Esophagus squamous epithelium (tissue), 5 donors: ENCODE measurements at regions of chr17 and their contacts with region 1.

Region 1: GRCh38 chr17:73255671-73256181 is 6.0 kb downstream of the CPSF4L start:
- DNase-seq: no peak
- H3K4me3 ChIP-seq: no peak overlapping the region
- H3K27ac ChIP-seq: no peak overlapping the region
- H3K4me1 ChIP-seq: peaks cover 0 to 12% (median 0%) of the 10 kb centered on the region in 3 donors
- H3K27me3 ChIP-seq: no peaks in the 10 kb centered on the region
- CTCF ChIP-seq: peak; percentile 94 to 98 (median 96)
- POLR2A ChIP-seq: no peak

Region 2: DNA sequence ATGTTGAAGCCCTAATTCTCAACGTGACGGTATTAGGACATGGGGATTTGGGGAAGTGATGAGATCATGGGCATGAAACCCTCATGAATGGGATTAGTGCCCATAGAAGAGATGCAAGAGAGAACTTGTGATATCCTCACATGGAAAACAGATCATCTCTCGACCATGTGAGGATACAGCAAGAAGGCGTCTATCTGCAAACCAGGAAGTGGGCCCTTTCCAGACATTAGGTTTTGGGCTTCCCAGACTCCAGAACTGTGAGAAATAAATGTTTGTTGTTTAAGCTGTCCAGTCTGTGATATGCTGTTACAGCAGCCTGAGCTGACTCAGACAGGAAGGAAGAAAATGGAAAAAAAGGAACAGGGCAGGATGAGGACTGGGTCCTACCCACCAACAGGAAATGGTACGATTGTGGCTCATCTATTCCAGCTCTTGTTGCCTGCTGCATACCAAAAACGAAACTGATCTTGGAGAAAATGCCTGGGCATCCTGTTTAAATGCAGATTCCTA is 112.8 kb before region 1 on chr17:
- intact Hi-C with region 1: no loop called
- DNase-seq: no peak
- H3K4me3 ChIP-seq: no peak overlapping the region
- H3K27ac ChIP-seq: peak overlapping the region in 1 of 4 donors; percentile 21
- H3K4me1 ChIP-seq: peaks cover 0 to 8% (median 0%) of the 10 kb centered on the region in 3 donors
- H3K27me3 ChIP-seq: peaks cover 0 to 24% (median 0%) of the 10 kb centered on the region in 4 donors
- CTCF ChIP-seq: no peak
- POLR2A ChIP-seq: no peak

Region 3: GRCh38 chr17:73192894-73193701 is 62.6 kb before region 1 on chr17 and contains the start of gene COG1:
- intact Hi-C with region 1: loop called (anchors 10 kb)
- DNase-seq: peak; percentile 35
- H3K4me3 ChIP-seq: peak within 1 kb of the TSS; percentile 85 to 95 (median 92)
- H3K27ac ChIP-seq: peak within 1 kb of the TSS; percentile 87 to 94 (median 93)
- H3K4me1 ChIP-seq: peaks cover 6 to 39% (median 11%) of the 10 kb centered on the region in 3 donors
- H3K27me3 ChIP-seq: no peaks in the 10 kb centered on the region
- CTCF ChIP-seq: peak in 1 of 6 experiments; percentile 6
- POLR2A ChIP-seq: peak in 1 of 4 donors; percentile 28
- total RNA-seq, gene COG1: 8.0 to 14.7 (median 9.2) TPM

Region 4: DNA sequence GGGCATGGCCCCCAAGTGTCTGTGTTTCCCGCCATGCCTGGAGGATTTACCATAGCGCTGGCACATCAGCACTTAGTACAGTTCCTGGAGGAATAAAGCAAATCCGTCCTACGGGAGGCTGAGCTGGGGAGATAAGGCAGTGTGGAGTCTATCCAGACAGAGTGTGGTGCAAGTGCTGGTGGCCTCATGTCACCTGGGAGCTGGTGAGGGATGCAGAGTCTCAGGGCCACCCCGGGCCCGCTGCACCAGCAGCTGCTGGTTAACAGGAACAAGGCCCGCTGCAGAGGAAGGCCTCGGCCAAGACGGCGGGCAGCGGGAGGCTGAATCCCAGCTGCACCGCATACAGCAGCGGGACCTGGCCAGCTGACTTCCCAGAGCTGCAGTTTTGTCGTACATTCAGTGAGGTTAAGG is 113.4 kb after region 1 on chr17:
- intact Hi-C with region 1: loop called (anchors 2 kb)
- DNase-seq: no peak
- H3K4me3 ChIP-seq: no peak overlapping the region
- H3K27ac ChIP-seq: no peak overlapping the region
- H3K4me1 ChIP-seq: peaks cover 0 to 22% (median 4%) of the 10 kb centered on the region in 3 donors
- H3K27me3 ChIP-seq: peaks cover 0 to 15% (median 0%) of the 10 kb centered on the region in 4 donors
- CTCF ChIP-seq: no peak
- POLR2A ChIP-seq: no peak

Region 5: DNA sequence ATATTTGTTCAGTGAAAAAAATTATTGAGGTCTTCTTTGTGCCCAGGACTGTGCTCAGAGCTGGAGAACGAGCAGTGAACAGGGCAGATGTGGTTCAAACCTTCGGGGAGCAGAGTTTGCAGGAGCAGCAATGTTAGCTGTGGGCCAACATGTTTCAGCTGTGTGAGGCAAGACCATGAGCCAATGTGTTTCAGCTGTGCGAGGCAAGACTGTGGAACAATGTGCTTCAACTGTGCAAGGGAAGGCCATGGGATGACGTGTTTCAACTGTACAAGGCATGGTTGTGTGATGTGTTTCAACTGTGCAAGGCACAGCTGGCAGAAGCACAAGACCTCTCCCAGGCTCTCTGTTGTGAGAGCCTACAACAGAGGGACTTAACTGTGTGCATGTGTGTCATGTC is 423.8 kb after region 1 on chr17:
- intact Hi-C with region 1: no loop called
- DNase-seq: no peak
- H3K4me3 ChIP-seq: no peak overlapping the region
- H3K27ac ChIP-seq: no peak overlapping the region
- H3K4me1 ChIP-seq: no peaks in the 10 kb centered on the region
- H3K27me3 ChIP-seq: peaks cover 0 to 38% (median 0%) of the 10 kb centered on the region in 4 donors
- CTCF ChIP-seq: no peak
- POLR2A ChIP-seq: no peak